ENCODE measurements at regions of chrX and their contacts with region 1.

Region 1: DNA sequence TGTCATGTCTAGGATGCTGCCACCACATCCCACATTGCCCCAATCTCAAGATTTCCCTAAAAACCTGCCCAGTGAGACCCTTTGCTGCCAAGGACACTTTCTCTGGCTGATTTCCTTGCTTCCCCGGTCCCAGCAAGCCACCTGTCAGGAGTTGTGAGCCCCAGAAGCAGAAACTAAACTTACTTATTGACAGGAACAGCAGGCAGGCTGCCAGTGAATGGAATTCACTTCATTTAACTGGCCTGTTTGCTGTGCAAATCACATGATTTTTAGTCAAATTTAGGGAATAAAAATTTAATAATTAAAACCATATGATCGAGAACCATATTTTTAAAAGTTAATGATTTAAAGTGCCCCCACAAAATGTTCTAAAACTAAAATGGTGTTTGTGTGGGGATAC is 48.5 kb downstream of the MAMLD1 start:
- DNase-seq: no peak
- H3K4me3 ChIP-seq: no peak overlapping the region
- H3K27ac ChIP-seq: no peak overlapping the region
- H3K4me1 ChIP-seq: no peaks in the 10 kb centered on the region
- H3K27me3 ChIP-seq: no peaks in the 10 kb centered on the region
- CTCF ChIP-seq: no peak

Region 2: GRCh38 chrX:150269605-150270254 is 141.9 kb before region 1 on chrX:
- CTCF ChIA-PET with region 1: no interaction called
- POLR2A ChIA-PET with region 1: no interaction called
- intact Hi-C with region 1: no loop called
- DNase-seq: no peak
- H3K4me3 ChIP-seq: no peak overlapping the region
- H3K27ac ChIP-seq: no peak overlapping the region
- H3K4me1 ChIP-seq: no peaks in the 10 kb centered on the region
- H3K27me3 ChIP-seq: no peaks in the 10 kb centered on the region
- CTCF ChIP-seq: no peak

Region 3: DNA sequence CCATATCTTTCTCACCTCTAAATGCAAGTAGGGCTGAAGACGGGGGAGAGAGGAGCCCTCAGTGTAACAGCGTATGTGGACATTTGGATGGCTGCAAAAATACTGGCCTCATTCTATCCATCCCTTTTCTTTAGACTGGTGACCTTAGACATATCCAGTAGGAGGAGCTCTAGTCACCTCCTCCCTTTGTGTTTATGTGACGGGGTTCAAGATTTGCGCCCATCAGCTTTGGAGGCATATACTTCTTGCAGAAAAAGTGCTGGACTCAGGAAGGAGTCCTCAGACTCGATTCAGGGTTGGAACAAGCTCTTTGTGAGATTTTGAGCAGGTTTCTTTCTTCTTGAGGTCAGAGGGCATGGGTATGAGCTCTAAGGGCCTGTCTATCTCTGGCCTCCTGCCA is 37.7 kb after region 1 on chrX:
- CTCF ChIA-PET with region 1: interaction called, 21 read pairs
- POLR2A ChIA-PET with region 1: no interaction called
- intact Hi-C with region 1: no loop called
- DNase-seq: no peak
- H3K4me3 ChIP-seq: no peak overlapping the region
- H3K27ac ChIP-seq: no peak overlapping the region
- H3K4me1 ChIP-seq: no peaks in the 10 kb centered on the region
- H3K27me3 ChIP-seq: no peaks in the 10 kb centered on the region
- CTCF ChIP-seq: peak; percentile 42; the same call in 1 of the 2 replicates